Heart left ventricle (tissue), 16 donors: ENCODE measurements at regions of chr11 and their contacts with region 1.

Region 1: DNA sequence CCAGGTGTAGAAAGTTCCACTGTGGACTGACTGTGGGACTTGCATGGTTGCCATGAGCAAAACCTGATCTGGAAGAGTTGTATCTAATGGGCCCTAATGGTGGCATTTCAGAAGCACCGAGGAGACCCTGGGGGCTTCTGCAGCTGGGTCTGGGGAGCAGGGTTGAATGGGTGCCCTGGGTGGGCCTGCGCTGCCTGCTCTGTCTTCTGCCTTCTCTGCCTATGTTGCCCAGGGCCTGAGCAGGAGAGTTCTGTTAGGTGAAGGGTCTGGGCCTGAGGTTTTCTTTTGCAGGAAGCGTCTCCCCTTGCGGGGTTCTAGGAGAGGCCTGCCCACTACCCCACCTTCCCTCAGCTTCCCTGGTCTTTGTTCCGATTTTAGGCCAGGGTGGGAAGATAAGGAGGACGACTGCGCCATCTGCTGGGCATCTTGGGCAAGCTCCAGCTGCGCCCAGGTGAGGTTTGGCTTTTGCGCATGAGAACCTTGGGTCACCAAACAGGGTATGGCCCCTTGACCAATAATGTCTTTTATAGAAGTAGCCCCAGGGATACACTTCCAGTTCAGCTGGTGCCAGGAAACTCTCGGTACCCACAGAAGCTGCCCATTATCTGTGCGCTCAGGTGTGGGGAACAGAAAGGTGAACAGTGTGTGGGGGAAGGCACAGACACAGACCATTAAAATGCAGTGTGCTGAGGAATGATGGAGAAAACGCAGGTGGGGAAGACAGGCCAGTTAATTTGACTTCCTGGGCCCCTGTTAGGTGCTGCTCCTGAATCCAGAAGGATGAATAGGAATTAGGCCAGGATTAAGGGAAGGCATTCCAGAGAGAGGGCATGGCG is 23.2 kb downstream of the COMMD9 start:
- DNase-seq: peak; percentile 16 to 72 (median 44)
- ATAC-seq: peak; percentile 34 to 76 (median 72)
- H3K4me3 ChIP-seq: no peak overlapping the region
- H3K27ac ChIP-seq: no peak overlapping the region
- H3K4me1 ChIP-seq: peaks cover 0 to 3% (median 0%) of the 10 kb centered on the region in 12 donors
- H3K27me3 ChIP-seq: peaks cover 0 to 7% (median 0%) of the 10 kb centered on the region in 9 donors
- CTCF ChIP-seq: peak; percentile 63 to 84 (median 74)
- POLR2A ChIP-seq: no peak

Region 2: GRCh38 chr11:35491231-35491871 is 774.7 kb before region 1 on chr11:
- intact Hi-C with region 1: loop called in 6 of 10 experiments (anchors 5 to 10 kb)
- DNase-seq: no peak
- ATAC-seq: no peak
- H3K4me3 ChIP-seq: no peak overlapping the region
- H3K27ac ChIP-seq: no peak overlapping the region
- H3K4me1 ChIP-seq: peaks cover 0 to 14% (median 1%) of the 10 kb centered on the region in 12 donors
- H3K27me3 ChIP-seq: peaks cover 0 to 21% (median 0%) of the 10 kb centered on the region in 9 donors
- CTCF ChIP-seq: no peak
- POLR2A ChIP-seq: no peak

Region 3: DNA sequence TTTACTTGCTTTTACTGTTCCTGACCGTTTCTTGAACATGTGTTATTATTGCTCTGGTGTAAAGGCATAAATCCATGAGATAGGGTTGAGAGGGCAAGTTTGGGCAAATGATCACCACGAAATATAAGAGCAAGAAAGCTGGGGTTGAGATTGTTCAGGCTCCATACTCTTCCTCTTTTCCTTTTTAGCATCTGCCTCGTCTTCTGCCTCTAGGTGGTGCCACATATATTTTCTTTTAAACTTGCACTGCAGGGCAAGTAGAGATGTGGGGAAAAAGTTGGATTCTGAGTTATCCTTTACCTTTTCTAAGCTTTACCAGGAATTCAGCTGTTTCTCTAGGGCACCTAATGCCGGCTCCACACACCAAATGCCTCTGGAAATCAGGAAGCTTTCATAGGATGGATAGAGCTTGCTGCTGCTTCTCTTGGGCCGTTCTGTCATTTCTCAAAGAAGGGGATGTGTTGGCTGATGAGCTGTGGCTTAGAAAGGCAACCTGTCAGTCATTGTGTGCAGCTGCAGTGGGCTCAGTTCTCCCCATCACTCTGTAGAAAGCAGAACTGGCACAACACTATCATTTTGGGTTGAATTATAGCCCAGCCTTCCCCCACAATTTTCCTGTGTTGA is 223.9 kb before region 1 on chr11:
- intact Hi-C with region 1: loop called in 4 of 10 experiments (anchors 5 to 10 kb)
- DNase-seq: no peak
- ATAC-seq: peak in 1 of 4 donors; percentile 48
- H3K4me3 ChIP-seq: no peak overlapping the region
- H3K27ac ChIP-seq: no peak overlapping the region
- H3K4me1 ChIP-seq: peaks cover 0 to 4% (median 0%) of the 10 kb centered on the region in 12 donors
- H3K27me3 ChIP-seq: no peaks in the 10 kb centered on the region
- CTCF ChIP-seq: peak in 10 of 12 donors; percentile 21 to 60 (median 42)
- POLR2A ChIP-seq: no peak